ENCODE measurements at regions of chr10 and their contacts with region 1.

Region 1: GRCh38 chr10:3467052-3467951 is 294.7 kb upstream of the PITRM1 start:
- DNase-seq: peak; percentile 83 to 96
- H3K4me3 ChIP-seq: peak overlapping the region; percentile 42; the same call in 1 of the 2 replicates
- H3K27ac ChIP-seq: peak overlapping the region; percentile 100
- H3K4me1 ChIP-seq: peaks cover 58% of the 10 kb centered on the region
- H3K27me3 ChIP-seq: no peaks in the 10 kb centered on the region
- CTCF ChIP-seq: peak; percentile 61

Region 2: GRCh38 chr10:3239066-3239919 is 228.0 kb before region 1 on chr10:
- CTCF ChIA-PET with region 1: no interaction called
- POLR2A ChIA-PET with region 1: interaction called, 3 read pairs
- intact Hi-C with region 1: loop called (anchors 2 kb)
- DNase-seq: peak in 1 of 2 experiments; percentile 79
- H3K4me3 ChIP-seq: no peak overlapping the region
- H3K27ac ChIP-seq: no peak overlapping the region
- H3K4me1 ChIP-seq: no peaks in the 10 kb centered on the region
- H3K27me3 ChIP-seq: no peaks in the 10 kb centered on the region
- CTCF ChIP-seq: peak; percentile 67

Region 3: GRCh38 chr10:3398825-3399646 is 68.3 kb before region 1 on chr10:
- CTCF ChIA-PET with region 1: no interaction called
- POLR2A ChIA-PET with region 1: no interaction called
- intact Hi-C with region 1: no loop called
- DNase-seq: peak in 1 of 2 experiments; percentile 4
- H3K4me3 ChIP-seq: no peak overlapping the region
- H3K27ac ChIP-seq: no peak overlapping the region
- H3K4me1 ChIP-seq: no peaks in the 10 kb centered on the region
- H3K27me3 ChIP-seq: no peaks in the 10 kb centered on the region
- CTCF ChIP-seq: no peak

Region 4: DNA sequence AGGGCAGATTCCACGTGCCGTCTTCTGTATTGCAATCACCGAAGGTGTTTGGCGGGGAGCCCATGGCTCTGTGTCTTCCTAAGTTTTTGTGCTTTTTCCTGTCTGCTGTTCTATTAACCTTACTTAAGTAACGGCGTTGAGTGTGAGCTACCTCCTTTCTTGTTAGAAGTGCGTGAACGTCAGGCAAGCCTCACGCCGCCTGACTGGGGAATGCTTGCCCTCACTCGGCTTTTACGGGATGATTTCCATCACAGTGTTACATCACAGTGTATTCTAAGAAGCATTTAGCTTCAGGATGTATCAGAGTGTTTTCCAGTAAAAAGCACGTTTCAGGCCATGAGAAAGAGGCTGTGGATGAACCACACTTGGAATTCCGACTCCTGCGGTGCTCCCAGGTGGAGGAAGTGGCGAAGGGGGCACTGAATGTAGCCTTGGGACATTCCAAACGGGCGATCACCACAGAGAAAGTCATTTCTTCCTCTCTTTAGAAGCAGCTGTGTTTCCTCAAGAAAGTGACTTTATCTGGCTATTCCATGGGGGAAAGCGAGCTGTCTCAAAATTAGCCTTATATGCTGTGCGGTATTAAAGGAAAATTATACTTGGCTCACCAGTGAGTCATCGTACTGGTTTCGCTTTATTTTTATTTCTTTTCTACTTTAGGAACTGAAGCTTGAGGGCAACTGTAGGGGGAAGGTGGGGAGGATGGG is 27.0 kb after region 1 on chr10:
- CTCF ChIA-PET with region 1: no interaction called
- POLR2A ChIA-PET with region 1: interaction called, 12 read pairs
- intact Hi-C with region 1: loop called (anchors 1 kb)
- DNase-seq: peak; percentile 50 to 75
- H3K4me3 ChIP-seq: peak overlapping the region; percentile 32
- H3K27ac ChIP-seq: peak overlapping the region; percentile 81
- H3K4me1 ChIP-seq: peaks cover 18% of the 10 kb centered on the region
- H3K27me3 ChIP-seq: no peaks in the 10 kb centered on the region
- CTCF ChIP-seq: no peak

Region 5: GRCh38 chr10:3595736-3596135 is 128.4 kb after region 1 on chr10:
- CTCF ChIA-PET with region 1: no interaction called
- POLR2A ChIA-PET with region 1: no interaction called
- intact Hi-C with region 1: no loop called
- DNase-seq: no peak
- H3K4me3 ChIP-seq: no peak overlapping the region
- H3K27ac ChIP-seq: no peak overlapping the region
- H3K4me1 ChIP-seq: no peaks in the 10 kb centered on the region
- H3K27me3 ChIP-seq: no peaks in the 10 kb centered on the region
- CTCF ChIP-seq: no peak

Region 6: GRCh38 chr10:3623746-3624145 is 156.4 kb after region 1 on chr10:
- CTCF ChIA-PET with region 1: no interaction called
- POLR2A ChIA-PET with region 1: interaction called, 32 read pairs
- intact Hi-C with region 1: loop called (anchors 1 kb)
- DNase-seq: peak; percentile 55 to 92
- H3K4me3 ChIP-seq: peak overlapping the region; percentile 49; the same call in 1 of the 2 replicates
- H3K27ac ChIP-seq: peak overlapping the region; percentile 100
- H3K4me1 ChIP-seq: peaks cover 48% of the 10 kb centered on the region
- H3K27me3 ChIP-seq: no peaks in the 10 kb centered on the region
- CTCF ChIP-seq: no peak

Region 7: DNA sequence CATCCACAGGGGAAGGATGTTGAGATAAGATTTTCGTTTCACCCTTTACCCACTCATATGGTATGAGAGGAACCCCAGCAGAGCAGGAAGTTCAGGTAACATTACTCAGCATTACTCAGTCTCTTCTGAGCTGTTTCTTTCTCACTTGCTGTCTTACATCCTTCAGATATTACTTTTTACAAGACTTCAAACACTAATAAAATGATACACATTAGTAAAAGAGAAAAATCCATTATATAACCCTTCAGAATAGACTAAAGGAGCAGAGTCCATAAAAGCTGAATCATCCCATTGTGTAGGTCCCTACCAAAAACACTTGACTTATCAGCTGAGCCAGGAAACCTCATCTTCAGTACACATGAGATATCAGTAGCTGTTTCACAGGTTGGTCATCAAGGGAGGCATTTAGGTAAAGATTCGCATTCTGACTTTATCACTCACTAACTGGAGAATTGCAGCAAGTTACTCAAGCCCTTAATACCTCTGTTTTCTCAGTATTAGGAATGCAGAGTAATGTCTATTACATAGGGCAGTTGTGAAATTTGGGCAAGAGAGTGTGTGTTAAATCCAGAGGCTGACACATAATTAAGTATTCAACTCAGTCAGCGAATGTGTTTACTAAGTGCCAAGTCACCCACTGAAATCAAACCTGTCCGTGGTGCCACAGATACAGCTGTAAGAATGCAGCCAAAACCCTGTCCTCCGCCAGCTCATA is 273.0 kb after region 1 on chr10:
- CTCF ChIA-PET with region 1: no interaction called
- POLR2A ChIA-PET with region 1: no interaction called
- intact Hi-C with region 1: loop called (anchors 1 kb)
- DNase-seq: peak in 1 of 2 experiments; percentile 97
- H3K4me3 ChIP-seq: peak overlapping the region; percentile 24; the same call in 1 of the 2 replicates
- H3K27ac ChIP-seq: peak overlapping the region; percentile 96
- H3K4me1 ChIP-seq: peaks cover 40% of the 10 kb centered on the region
- H3K27me3 ChIP-seq: no peaks in the 10 kb centered on the region
- CTCF ChIP-seq: no peak

Region 8: DNA sequence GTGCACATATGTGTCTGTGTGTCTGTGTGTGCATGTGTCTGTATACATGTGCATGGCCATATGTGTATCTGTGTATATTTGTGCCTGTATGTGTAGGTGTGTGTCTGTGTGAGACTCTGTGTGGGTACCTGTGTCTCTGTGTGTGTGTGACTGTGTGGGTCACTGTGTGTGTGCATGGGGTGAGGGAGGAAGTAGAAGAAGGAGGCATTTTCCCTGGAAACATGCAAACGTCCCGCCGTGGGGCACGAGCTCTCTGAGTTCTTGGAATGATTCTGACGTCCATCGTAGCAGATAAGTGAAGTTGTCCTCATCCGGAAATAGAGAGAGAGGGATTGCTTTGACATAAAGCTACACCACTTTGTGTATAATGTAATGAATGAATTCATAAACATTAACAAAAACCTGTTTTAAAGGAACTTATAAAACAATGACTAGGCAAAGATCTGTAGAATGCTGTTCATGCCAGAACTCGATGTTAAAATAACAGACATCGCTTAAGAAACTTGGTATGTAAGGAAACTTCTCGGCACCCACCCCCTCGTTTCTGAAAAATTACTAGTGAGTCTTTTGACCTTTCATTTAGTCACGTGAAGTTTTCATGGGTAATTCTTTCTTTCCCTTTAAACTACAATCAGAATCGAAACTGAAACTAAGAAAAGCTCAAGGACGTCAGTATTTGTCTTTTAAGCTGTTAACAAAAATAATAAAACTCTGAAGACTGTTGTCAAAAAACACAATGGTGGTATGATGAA is 361.3 kb after region 1 on chr10:
- CTCF ChIA-PET with region 1: no interaction called
- POLR2A ChIA-PET with region 1: no interaction called
- intact Hi-C with region 1: loop called (anchors 5 kb)
- DNase-seq: no peak
- H3K4me3 ChIP-seq: no peak overlapping the region
- H3K27ac ChIP-seq: no peak overlapping the region
- H3K4me1 ChIP-seq: peaks cover 31% of the 10 kb centered on the region
- H3K27me3 ChIP-seq: no peaks in the 10 kb centered on the region
- CTCF ChIP-seq: no peak

Region 9: GRCh38 chr10:4344511-4344994 is 877.3 kb after region 1 on chr10:
- CTCF ChIA-PET with region 1: no interaction called
- POLR2A ChIA-PET with region 1: no interaction called
- intact Hi-C with region 1: loop called (anchors 5 kb)
- DNase-seq: peak; percentile 87 to 97
- H3K4me3 ChIP-seq: peak overlapping the region; percentile 16; the same call in 1 of the 2 replicates
- H3K27ac ChIP-seq: peak overlapping the region; percentile 93
- H3K4me1 ChIP-seq: peaks cover 23% of the 10 kb centered on the region
- H3K27me3 ChIP-seq: no peaks in the 10 kb centered on the region
- CTCF ChIP-seq: no peak

Measured in PC-9 (cell line).